AG04449 (cell line): ENCODE measurements at regions of chr7 and their contacts with region 1.

Region 1: GRCh38 chr7:106166655-106167342 is 54.7 kb upstream of the SYPL1 start:
- DNase-seq: no peak
- H3K4me3 ChIP-seq: no peak overlapping the region
- CTCF ChIP-seq: peak; percentile 68

Region 2: DNA sequence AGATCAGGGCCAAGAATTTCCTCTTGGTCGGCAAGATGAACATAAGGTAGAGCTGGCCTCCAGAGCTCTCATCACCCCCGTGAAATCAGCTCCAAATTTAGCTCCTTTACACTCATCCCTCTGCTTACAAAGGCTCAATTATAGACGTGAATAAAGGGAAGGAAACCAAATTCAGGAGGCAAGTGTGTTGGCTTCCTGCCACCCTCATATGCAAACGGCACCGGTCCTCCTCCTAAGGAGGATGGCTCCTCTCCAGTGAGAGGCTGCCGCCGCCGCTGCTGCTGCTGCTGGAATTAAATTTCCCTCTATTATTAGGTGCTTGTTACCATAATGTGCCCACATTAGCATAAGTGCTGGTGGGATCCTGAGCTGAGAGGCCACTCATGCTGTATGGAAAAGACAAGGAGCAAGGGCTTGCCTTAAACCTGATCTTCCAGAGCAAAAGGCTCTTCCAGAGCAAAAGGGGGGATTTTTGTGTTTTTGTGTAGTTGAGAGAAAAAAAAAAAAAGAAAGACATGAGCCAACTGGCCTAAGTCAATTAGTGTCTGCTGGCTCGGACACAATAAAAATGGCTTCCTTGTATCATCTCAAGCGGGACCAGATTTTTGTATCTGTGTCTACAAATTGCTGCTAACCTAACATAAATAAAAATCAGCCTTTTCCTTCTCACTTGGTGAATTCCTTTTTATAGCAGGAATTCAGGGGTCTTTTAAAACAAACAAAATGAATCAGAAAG is 135.3 kb before region 1 on chr7:
- CTCF ChIA-PET with region 1: no interaction called
- POLR2A ChIA-PET with region 1: no interaction called
- DNase-seq: no peak
- H3K4me3 ChIP-seq: no peak overlapping the region
- CTCF ChIP-seq: no peak

Region 3: GRCh38 chr7:106050011-106050745 is 116.6 kb before region 1 on chr7:
- CTCF ChIA-PET with region 1: interaction called, 13 read pairs
- POLR2A ChIA-PET with region 1: no interaction called
- DNase-seq: no peak
- H3K4me3 ChIP-seq: no peak overlapping the region
- CTCF ChIP-seq: peak; percentile 45

Region 4: DNA sequence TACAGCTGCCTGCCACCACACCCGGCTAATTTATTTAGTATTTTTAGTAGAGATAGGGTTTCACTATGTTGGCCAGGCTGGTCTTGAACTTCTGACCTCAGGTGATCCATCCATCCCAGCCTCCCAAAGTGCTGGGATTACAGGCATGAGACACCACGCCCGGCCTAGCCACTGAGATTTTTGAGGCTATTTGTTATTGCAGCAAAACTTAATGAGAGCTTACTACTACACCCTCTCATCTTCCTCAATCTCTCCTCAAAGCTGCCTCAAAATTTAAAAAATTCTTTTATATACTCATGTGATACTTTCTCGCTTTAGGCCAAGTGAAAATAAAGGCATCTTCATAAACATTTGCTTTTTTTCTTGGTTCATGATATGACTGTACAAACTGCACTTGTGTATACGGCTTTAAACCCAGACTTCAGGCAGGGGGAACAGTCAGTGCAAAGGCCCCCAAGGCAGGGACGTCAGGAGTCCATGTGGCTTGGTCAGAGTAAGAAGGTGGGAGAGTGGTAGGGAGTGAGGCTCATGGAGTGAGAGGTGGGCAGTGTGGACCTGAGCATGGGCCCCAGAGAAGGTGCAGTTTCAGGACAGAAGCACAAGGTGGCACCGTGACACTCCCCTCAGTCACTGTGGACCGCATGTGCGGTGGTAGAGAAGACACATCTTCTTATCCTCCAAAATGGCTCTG is 110.1 kb before region 1 on chr7:
- CTCF ChIA-PET with region 1: interaction called, 83 read pairs
- POLR2A ChIA-PET with region 1: no interaction called
- DNase-seq: no peak
- H3K4me3 ChIP-seq: no peak overlapping the region
- CTCF ChIP-seq: peak; percentile 92

Region 5: GRCh38 chr7:106064771-106065585 is 101.8 kb before region 1 on chr7:
- CTCF ChIA-PET with region 1: interaction called, 14 read pairs
- POLR2A ChIA-PET with region 1: no interaction called
- DNase-seq: peak; percentile 82
- H3K4me3 ChIP-seq: peak overlapping the region; percentile 32
- CTCF ChIP-seq: peak; percentile 22

Region 6: DNA sequence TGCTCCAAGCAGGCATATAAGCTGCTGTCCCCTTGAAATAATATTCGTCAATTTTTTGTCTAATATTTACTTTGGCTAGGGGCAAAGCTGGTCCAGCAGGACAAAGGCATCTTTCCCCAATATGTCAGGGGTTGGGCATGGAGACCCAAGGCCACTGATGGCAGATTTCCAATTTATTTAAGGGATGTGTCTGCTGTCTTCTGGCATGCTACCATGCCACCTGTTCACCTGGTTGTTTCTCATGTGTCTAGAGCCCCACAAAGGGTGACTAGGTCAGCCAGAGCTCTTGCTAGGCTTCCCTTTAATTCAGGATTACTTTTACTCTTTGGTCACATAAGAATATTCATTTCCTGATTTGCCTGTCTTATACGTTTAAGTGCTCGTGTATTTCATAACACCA is 32.6 kb before region 1 on chr7:
- CTCF ChIA-PET with region 1: interaction called, 10 read pairs
- POLR2A ChIA-PET with region 1: no interaction called
- DNase-seq: no peak
- H3K4me3 ChIP-seq: no peak overlapping the region
- CTCF ChIP-seq: no peak